Activated CD4-positive, alpha-beta T cell treated with anti-CD3 and anti-CD28 coated beads for 36 hours (primary cell): ENCODE measurements at regions of chr4 and their contacts with region 1.

Region 1: GRCh38 chr4:42656944-42657792 is at the start of gene ATP8A1:
- DNase-seq: peak; percentile 97
- ATAC-seq: peak; percentile 88
- H3K4me3 Mint-ChIP-seq: peak within 1 kb of the TSS; percentile 84
- H3K27ac Mint-ChIP-seq: peak within 1 kb of the TSS; percentile 97
- H3K4me1 Mint-ChIP-seq: peaks cover 39% of the 10 kb centered on the region
- H3K27me3 Mint-ChIP-seq: no peaks in the 10 kb centered on the region
- total RNA-seq, gene ATP8A1: 15.1 to 21.1 TPM

Region 2: DNA sequence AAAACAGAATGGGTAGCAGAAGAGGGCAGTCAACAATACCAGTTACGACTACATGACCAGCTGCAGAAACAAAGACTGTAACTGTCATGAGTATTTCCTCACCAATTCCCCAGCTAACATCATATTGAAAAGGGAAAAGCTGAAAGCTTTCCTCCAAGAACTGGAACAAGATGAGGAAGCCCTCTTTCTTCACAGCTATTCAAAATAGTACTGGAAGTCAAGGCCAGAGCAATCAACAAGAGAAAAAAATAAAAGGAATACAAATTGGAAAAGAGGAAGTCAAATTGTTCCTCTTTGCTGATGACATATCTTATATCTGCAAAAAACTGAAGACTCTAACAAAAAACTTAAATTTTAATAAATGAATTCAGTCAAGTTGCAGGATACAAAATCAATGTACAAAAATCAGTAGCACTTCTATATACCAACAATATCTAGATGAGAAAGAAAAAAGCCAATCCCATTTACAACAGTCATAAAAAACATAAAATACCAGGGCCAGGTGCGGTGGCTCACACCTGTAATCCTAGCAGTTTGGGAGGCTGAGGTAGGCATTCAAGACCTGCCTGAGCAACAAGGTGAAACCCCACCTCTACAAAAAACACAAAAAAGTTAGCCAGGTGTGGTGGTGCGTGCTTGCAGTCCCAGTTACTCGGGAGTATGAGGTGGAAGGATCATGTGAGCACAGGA is 125.7 kb before region 1 on chr4:
- CTCF ChIA-PET with region 1: no interaction called
- POLR2A ChIA-PET with region 1: no interaction called
- intact Hi-C with region 1: no loop called
- DNase-seq: no peak
- ATAC-seq: no peak
- H3K4me3 Mint-ChIP-seq: no peak overlapping the region
- H3K27ac Mint-ChIP-seq: no peak overlapping the region
- H3K4me1 Mint-ChIP-seq: peaks cover 5% of the 10 kb centered on the region
- H3K27me3 Mint-ChIP-seq: no peaks in the 10 kb centered on the region

Region 3: GRCh38 chr4:42568610-42569207 is 88.5 kb before region 1 on chr4:
- CTCF ChIA-PET with region 1: interaction called, 8 read pairs
- POLR2A ChIA-PET with region 1: no interaction called
- intact Hi-C with region 1: loop called (anchors 2 kb)
- DNase-seq: peak; percentile 79
- ATAC-seq: peak; percentile 89
- H3K4me3 Mint-ChIP-seq: no peak overlapping the region
- H3K27ac Mint-ChIP-seq: no peak overlapping the region
- H3K4me1 Mint-ChIP-seq: no peaks in the 10 kb centered on the region
- H3K27me3 Mint-ChIP-seq: no peaks in the 10 kb centered on the region

Region 4: GRCh38 chr4:42627885-42628646 is 29.1 kb before region 1 on chr4:
- CTCF ChIA-PET with region 1: no interaction called
- POLR2A ChIA-PET with region 1: no interaction called
- intact Hi-C with region 1: loop called in 1 of 2 experiments (anchors 1 kb)
- DNase-seq: peak; percentile 62
- ATAC-seq: peak; percentile 93
- H3K4me3 Mint-ChIP-seq: peak overlapping the region; percentile 22
- H3K27ac Mint-ChIP-seq: peak overlapping the region; percentile 84
- H3K4me1 Mint-ChIP-seq: peaks cover 57% of the 10 kb centered on the region
- H3K27me3 Mint-ChIP-seq: no peaks in the 10 kb centered on the region

Region 5: DNA sequence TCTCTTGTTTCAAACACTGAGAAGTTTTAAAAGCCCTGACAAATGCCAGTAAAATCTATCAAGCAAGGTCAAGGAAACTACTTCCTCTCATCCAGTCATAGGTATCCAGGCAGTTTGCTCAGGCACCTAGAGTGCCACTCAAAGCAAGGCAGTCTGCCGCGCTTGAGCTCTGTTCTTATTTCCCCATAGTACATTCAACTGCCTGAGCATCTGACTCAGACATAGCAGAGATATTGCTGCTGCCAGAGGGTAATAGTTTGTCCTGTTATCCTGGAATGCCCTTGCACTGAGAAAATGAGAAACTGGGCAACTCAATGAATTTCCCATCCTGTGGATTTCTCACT is 15.9 kb after region 1 on chr4:
- CTCF ChIA-PET with region 1: interaction called, 14 read pairs
- POLR2A ChIA-PET with region 1: interaction called, 8 read pairs
- intact Hi-C with region 1: loop called (anchors 1 kb)
- DNase-seq: peak; percentile 53
- ATAC-seq: peak; percentile 65
- H3K4me3 Mint-ChIP-seq: peak overlapping the region; percentile 10
- H3K27ac Mint-ChIP-seq: peak overlapping the region; percentile 90
- H3K4me1 Mint-ChIP-seq: peaks cover 44% of the 10 kb centered on the region
- H3K27me3 Mint-ChIP-seq: no peaks in the 10 kb centered on the region

Region 6: DNA sequence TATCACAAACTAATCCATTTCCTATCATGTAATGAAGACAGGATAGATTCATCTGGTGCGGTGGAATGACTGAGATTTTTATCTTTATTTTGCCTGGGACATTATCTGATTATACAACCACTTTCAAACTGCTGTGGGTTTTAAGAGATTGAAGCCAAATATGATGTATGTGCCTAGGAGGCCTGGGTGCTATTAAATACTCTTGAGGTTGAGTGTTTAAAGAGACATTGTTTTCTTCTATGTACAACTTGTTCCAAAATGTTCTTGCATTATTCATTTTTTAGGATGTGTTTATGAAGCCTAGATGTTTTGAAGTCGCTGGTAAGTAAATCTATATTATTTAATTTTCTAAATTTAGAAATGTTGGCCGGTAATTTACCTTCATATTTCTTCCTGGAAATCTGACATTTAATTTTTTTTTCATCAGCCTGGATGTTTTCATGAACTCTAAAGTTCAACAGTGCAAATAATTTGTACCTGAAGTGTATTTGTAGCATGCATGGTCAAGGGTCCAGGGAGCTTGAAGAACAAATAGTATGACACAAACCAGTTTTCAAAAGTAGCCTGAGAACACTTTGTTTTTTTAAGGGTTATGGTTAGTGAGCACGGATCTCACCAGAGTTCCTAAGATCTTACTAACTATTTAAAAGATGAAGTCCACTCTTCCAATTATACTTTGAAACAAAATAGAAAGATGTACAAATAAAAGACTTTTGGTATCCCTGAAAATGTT is 72.5 kb after region 1 on chr4:
- CTCF ChIA-PET with region 1: no interaction called
- POLR2A ChIA-PET with region 1: no interaction called
- intact Hi-C with region 1: no loop called
- DNase-seq: no peak
- ATAC-seq: no peak
- H3K4me3 Mint-ChIP-seq: no peak overlapping the region
- H3K27ac Mint-ChIP-seq: no peak overlapping the region
- H3K4me1 Mint-ChIP-seq: peaks cover 3% of the 10 kb centered on the region
- H3K27me3 Mint-ChIP-seq: peaks cover 3% of the 10 kb centered on the region